Activated T-helper 1 cell treated with anti-CD3 and anti-CD28 coated beads, Interleukin-12 subunit alpha, Interleukin-12 subunit beta, Interleukin-2, Interleukin-4 antibody, amounts not matched to agents 30 ng/mL and 10 ng/mL and 1 ng/mL, durations not matched to agents 14 hours and 24 hours and 36 hours (primary cell): ENCODE measurements at regions of chr19 and their contacts with region 1.

Region 1: DNA sequence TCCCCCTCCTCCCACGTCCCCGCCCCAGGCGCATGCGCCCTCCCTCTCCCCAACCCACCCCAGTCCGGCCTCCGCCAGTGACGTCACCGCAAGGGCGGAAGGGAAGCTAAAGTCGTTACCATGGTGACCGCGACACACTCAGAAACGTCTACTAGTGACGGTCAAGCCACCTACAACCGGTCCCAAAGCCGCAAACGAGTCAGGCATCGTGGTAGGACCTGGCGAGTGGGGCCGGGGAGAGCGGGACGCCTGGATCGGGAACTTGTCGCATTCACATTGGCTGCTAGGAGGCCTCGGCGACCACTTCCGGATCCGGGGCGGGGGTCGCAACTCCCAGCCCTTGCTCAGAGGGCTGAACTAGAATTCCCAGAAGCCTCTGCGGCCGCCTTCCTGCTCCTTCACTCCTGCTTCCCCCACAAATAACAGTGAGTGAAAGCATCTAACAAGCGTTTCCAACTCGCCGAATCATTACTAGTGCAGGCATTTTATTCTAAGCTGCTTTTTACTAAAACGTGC is at the start of gene ZSCAN5A:
- DNase-seq: peak; percentile 92
- H3K4me3 Mint-ChIP-seq: peak within 1 kb of the TSS; percentile 93
- H3K27ac Mint-ChIP-seq: peak within 1 kb of the TSS; percentile 99
- H3K4me1 Mint-ChIP-seq: peaks cover 29% of the 10 kb centered on the region
- H3K27me3 Mint-ChIP-seq: no peaks in the 10 kb centered on the region
- total RNA-seq, gene ZSCAN5A: 7.3 and 7.5 TPM in 2 replicates

Region 2: GRCh38 chr19:55632463-55632834 is 682.2 kb before region 1 on chr19:
- intact Hi-C with region 1: loop called (anchors 1 kb)
- DNase-seq: peak; percentile 82
- H3K4me3 Mint-ChIP-seq: no peak overlapping the region
- H3K27ac Mint-ChIP-seq: peak overlapping the region; percentile 68
- H3K4me1 Mint-ChIP-seq: peaks cover 47% of the 10 kb centered on the region
- H3K27me3 Mint-ChIP-seq: peaks cover 20% of the 10 kb centered on the region

Region 3: GRCh38 chr19:56080669-56081401 is 233.8 kb before region 1 on chr19:
- intact Hi-C with region 1: loop called (anchors 1 kb)
- DNase-seq: peak; percentile 43
- H3K4me3 Mint-ChIP-seq: peak overlapping the region; percentile 76
- H3K27ac Mint-ChIP-seq: no peak overlapping the region
- H3K4me1 Mint-ChIP-seq: peaks cover 9% of the 10 kb centered on the region
- H3K27me3 Mint-ChIP-seq: no peaks in the 10 kb centered on the region

Region 4: DNA sequence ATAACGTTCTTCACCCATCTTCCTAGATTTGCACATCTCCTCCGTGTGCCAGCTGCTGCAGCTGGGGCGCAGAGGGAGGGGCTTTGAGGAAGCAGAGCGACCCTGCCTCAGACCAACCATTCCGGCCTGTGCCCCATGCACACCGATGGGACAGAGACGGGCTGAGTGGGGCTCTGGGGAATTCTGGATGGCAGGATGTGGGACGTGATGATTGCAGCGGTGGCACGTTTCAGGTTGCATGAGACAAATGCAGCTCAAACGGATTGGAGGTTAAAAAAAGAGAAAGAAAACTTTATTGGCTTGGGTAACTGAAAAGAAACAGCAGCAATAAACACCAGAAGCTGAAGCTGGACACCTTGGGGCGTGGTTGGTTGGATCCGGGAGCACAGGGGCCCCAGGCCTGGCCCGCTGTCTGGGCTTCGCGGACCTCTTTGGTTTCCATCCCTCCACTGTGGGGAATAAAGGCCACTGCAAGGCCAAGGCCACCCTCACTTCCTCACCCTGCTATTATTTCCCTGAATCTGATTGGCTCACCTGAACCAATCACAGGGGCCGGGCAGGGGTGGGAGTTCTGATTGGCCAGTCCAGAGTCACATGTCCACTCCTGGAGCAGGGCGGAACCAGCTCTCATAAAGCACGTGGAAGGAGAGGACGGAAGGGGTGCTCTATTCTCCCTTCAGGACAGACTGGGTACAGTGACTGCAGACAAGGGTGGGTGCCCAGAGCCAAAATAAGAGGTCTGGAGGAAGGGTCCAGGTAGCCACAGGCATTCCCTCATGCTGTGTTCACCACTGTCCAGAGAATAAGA is 187.4 kb before region 1 on chr19:
- intact Hi-C with region 1: no loop called
- DNase-seq: no peak
- H3K4me3 Mint-ChIP-seq: no peak overlapping the region
- H3K27ac Mint-ChIP-seq: no peak overlapping the region
- H3K4me1 Mint-ChIP-seq: peaks cover 9% of the 10 kb centered on the region
- H3K27me3 Mint-ChIP-seq: peaks cover under 1% of the 10 kb centered on the region

Region 5: DNA sequence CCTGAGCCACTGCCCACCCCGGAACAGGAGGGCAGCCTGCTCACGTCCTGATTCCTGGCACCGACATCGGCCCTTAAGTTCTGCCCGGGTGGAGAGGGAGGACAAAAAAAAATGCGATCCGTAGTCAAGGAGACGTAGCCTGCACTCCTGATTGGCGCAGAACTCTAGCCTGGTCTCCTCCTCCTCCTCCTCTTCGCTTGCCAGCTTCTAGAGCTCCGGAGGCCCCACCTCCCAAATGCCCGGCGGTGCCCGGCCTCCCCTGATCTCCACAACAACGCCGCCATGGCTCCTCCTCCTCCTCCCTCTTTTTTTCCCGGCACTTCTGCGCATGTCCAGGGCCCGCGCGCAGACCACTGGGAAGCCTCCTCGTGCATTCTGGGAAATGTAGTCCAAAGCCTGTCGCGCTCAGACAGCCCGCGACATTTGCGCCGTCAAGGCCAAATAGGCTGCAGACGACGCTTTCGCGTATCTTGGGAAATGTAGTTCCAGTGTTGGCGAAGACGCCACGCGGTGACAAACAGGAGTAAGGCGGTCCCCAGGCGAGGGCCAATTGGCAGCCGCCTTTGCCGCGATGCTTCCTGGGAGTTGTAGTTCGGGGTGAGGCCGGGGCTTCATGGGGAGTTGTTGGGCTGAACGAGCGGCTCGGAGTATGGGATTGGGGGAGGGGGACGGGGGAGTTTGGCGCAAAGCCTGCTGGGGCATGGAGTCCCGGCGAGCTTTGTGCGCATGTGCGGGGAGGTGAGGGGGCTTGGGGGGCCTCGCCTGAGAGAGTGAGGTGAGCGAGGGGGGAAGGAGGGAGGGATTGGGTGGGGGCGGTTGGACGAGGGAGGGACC is 173.8 kb before region 1 on chr19 and contains the start of gene ZNF444:
- intact Hi-C with region 1: loop called (anchors 1 kb)
- DNase-seq: peak; percentile 99
- H3K4me3 Mint-ChIP-seq: peak within 1 kb of the TSS; percentile 82
- H3K27ac Mint-ChIP-seq: peak within 1 kb of the TSS; percentile 84
- H3K4me1 Mint-ChIP-seq: peaks cover 37% of the 10 kb centered on the region
- H3K27me3 Mint-ChIP-seq: no peaks in the 10 kb centered on the region
- total RNA-seq, gene ZNF444: 33.8 and 36.5 TPM in 2 replicates

Region 6: DNA sequence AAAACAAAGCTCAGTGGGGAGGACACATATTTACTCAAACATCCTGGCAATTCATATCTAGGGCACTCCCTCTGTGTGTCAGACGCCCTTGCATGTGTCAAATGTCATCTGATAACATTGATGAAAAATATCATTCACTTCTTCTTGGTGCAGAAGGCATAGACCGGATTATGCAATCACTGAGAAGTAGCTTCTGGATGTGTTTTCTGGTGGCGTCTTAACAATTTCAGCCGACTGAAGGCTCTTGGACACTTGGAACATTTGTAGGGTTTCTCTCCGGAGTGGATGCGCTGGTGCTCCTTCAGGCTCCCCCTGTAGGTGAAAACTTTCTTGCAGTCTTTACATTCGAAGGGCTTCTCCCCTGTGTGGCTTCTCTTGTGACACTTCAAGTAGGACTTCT is 93.2 kb before region 1 on chr19:
- intact Hi-C with region 1: no loop called
- DNase-seq: no peak
- H3K4me3 Mint-ChIP-seq: no peak overlapping the region
- H3K27ac Mint-ChIP-seq: no peak overlapping the region
- H3K4me1 Mint-ChIP-seq: no peaks in the 10 kb centered on the region
- H3K27me3 Mint-ChIP-seq: peaks cover 4% of the 10 kb centered on the region

Region 7: DNA sequence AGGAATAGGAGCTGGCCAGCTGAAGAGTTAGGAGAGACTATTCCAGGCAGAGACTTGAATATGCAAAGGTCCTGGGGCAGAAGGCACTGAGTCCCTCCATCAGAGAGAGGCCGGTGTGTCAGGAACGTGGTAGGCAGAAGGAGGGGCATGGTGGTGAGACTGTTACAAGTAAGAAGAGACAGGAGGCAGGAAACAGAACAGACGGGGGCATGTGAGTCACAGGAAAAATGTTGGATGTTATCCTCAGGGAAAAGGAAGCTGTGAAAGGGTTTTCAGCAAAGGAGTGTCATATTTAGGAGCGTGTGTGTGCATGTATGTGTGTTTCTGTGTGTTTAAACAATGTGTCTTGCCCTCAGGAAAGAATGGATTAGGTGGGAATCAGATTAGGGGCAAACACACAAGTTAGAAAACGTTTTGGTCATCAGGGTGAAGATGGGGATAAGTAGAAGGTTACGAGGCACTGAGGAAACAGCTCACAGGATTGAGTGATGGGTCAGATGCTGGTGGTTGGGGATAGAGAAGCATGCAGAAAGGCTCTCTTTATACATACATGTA is 41.0 kb before region 1 on chr19:
- intact Hi-C with region 1: no loop called
- DNase-seq: no peak
- H3K4me3 Mint-ChIP-seq: no peak overlapping the region
- H3K27ac Mint-ChIP-seq: peak overlapping the region; percentile 8
- H3K4me1 Mint-ChIP-seq: no peaks in the 10 kb centered on the region
- H3K27me3 Mint-ChIP-seq: no peaks in the 10 kb centered on the region

Region 8: DNA sequence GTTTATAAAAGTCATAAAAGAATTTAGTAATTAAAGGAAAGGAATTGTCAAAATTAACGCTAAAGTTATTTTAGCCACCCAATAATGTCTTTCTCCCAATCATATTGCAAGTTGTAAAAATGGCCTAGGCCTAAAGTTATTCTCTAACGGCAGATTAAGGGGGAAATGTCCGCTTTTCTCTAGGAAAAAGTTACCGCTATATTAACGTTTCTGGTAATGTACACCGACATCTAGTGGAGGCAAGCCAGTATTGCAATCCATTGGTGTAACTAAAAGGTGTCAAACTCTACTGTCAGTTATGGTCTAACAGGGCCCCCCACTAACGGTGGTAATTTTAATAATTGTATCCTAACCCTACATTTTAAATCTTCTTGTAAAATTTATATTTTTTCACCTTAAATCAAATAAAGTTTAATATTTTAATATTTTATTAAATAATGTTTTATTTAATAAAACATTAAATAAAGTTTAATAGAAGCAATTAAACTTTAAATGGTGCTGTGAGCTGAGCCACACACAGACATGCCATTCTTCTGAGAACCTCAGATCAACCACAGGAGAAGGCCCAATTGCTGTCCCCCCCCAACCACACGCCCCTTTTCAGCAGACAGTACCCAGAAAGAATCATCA is 35.9 kb after region 1 on chr19:
- intact Hi-C with region 1: loop called (anchors 1 kb)
- DNase-seq: peak; percentile 16
- H3K4me3 Mint-ChIP-seq: no peak overlapping the region
- H3K27ac Mint-ChIP-seq: no peak overlapping the region
- H3K4me1 Mint-ChIP-seq: no peaks in the 10 kb centered on the region
- H3K27me3 Mint-ChIP-seq: no peaks in the 10 kb centered on the region

Region 9: DNA sequence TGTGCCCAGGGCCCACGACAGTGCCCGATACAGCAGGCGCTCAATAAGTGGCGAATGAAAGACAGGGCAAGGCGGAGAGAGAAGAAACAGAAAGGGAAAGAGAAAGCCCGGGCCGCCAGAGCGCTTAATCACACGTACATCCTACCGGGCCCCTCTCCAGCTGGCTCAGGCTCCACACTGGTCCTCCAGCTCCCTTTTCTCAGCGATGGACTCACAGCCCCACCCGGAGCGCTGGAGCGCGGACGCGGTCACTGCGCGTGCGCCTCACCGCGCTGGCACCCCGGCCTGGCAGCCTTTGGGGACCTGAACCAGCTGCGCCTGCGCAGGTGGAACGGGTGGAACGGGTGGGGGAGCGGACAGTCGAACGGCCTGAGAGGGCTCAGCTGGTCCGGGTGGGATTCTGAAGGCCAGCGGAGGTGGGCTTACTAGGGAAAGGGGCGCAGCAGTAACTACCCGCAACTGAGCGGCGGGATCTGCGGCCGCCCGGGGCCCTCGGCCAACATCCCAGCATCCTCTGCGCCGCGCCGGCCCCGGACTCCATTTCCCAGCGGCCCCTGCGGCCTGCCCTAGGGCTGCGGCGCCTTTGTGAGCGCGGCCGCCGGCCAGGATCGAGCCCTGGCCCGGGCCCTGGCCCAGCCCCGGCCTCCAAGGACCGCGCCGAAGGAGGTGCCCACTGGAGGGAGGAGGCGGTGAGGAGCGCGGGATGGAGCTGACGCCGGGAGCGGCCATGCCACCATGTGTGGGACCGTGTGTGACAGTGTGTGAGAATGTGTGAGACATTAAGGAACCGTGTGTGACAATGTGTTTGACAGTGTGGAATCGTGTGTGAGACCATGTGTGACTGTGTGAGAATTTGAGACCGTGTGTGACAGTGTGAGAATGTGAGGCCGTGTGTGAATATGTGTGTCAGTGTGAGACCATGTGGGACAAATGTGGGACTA is 89.4 kb after region 1 on chr19 and contains the start of gene ZNF583:
- intact Hi-C with region 1: loop called (anchors 1 kb)
- DNase-seq: peak; percentile 86
- H3K4me3 Mint-ChIP-seq: peak within 1 kb of the TSS; percentile 93
- H3K27ac Mint-ChIP-seq: peak within 1 kb of the TSS; percentile 96
- H3K4me1 Mint-ChIP-seq: peaks cover 23% of the 10 kb centered on the region
- H3K27me3 Mint-ChIP-seq: no peaks in the 10 kb centered on the region
- total RNA-seq, gene ZNF583: 1.4 and 2.1 TPM in 2 replicates

Region 10: DNA sequence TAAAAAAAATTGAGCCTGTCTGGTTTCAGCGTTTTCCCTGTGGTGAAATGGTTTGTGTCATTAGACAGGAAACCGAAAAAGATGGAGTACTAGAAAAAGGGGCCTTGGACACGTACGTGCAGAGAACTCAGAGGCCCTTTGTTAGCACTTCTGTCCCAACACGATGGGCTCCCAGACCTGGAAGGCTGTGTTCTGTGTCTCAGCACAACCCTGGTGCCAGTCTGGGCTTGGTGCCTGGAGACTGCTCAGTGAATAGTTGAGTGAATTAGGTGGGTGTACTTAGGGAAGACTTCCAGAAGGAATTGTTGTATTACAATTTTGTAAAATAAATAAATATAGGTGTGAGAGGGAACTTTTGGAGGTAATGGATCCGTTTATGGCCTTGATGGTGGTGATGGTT is 289.2 kb after region 1 on chr19:
- intact Hi-C with region 1: no loop called
- DNase-seq: no peak
- H3K4me3 Mint-ChIP-seq: no peak overlapping the region
- H3K27ac Mint-ChIP-seq: no peak overlapping the region
- H3K4me1 Mint-ChIP-seq: no peaks in the 10 kb centered on the region
- H3K27me3 Mint-ChIP-seq: no peaks in the 10 kb centered on the region

Region 11: GRCh38 chr19:57819475-57820148 is 1505.0 kb after region 1 on chr19:
- intact Hi-C with region 1: loop called (anchors 10 kb)
- DNase-seq: peak; percentile 76
- H3K4me3 Mint-ChIP-seq: peak overlapping the region; percentile 99
- H3K27ac Mint-ChIP-seq: peak overlapping the region; percentile 98
- H3K4me1 Mint-ChIP-seq: peaks cover 50% of the 10 kb centered on the region
- H3K27me3 Mint-ChIP-seq: no peaks in the 10 kb centered on the region